HepG2 (cell line): ENCODE measurements at regions of chr6 and their contacts with region 1.

Region 1: DNA sequence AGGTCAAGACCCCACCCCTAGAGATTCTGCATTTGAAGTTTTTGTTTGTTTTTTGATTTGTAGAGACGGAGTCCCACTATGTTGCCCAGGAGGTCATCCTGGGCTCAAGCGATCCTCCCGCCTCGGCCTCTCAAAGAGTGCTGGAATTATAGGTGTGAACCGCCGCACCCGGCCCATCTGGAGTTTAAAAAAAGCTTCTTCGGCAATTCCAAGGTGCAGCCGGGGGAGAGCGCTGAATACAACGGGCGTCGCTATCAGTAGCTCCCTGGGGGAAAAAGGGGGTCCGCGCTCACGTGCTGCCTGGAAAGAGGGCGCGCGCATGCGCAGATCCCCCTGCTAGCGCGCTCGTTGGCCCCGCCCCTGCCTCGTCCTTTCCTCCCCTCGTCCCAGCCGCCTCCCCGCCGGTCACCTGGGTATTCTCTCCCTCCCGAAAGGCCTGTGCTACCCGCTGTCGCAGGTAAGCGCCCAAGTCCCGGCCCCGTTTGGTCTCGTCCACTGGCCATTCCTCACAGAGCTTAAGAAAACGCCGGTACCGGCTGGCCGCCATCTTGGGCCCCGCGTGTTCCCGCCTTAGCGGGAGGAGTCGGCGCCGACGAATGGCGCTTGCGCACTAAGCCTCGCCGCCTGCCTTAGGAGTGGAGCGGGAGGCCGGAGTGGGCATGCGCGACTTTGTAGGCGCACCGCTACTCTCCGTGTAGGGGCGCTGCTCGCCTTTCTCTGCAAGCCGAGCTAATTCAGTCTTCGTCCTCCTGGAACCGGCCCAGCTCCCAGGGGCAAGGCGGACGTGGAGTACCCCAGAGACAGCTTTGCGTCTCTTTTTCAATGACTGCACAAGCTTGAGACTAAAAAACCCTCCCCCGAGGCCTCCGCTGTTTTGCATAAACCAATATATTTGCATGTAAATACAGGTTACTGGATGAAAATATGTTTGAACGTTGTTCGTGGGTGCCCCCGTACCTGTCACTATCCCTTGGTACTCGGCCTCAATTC is at the start of gene UQCC2:
- DNase-seq: peak; percentile 95
- ATAC-seq: peak; percentile 94
- H3K4me3 ChIP-seq: peak within 1 kb of the TSS; percentile 75 to 83 (median 75)
- H3K27ac ChIP-seq: peak within 1 kb of the TSS; percentile 93
- H3K4me1 ChIP-seq: peaks cover 63% of the 10 kb centered on the region
- H3K27me3 ChIP-seq: no peaks in the 10 kb centered on the region; a peak in 1 of 5 replicates
- CTCF ChIP-seq: peak; percentile 98
- EP300 ChIP-seq: no peak
- POLR2A ChIP-seq: peak; percentile 85 to 96
- RAD21 ChIP-seq: peak; percentile 97
- total RNA-seq, gene UQCC2: 238 and 273 TPM in 2 replicates

Region 2: DNA sequence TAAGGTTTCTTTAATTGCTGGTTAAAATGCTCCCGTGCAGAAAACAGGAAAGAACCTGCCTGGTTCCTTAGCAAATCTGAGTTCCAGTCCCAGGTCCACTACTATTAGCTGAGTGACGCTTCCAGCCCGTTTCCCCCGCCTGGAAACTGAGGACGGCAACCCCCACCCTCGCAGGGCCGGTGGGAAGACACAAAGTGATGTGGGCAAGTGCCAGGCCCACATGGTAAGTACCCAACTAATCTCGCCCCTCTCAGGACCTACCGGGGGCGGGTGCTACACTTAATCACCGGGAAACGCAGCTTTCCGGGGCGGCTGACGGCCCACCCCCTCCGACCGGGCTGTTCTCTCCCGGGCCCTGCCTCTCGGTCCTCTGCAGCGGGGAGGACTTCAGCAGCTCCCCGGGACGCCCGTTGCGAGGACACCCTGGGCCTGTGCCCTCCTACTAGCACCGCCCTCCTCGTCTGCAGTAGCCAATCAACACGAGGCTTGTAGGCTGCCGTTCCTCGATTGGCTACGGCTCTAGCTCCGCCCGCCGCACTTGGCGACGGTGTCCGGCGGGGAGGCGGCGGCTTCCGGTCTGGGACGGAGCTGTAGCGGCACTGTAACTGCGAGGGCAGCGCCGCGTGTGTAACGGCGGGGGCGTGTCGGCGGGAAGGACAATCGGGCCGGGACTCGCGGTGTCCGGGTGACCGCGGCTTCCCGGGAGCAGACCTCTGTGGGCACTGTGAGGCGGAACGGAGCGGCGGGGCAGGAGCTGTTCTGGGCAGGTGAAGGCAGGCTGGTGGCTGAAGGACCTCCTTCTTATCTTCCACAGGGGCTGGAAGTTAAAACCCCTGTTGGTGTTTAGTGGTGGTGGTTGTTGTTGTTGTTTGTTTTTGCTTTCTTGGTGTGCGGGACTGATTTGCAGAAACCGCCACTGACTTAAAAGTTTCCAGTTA is 257.2 kb before region 1 on chr6 and contains the start of gene ZBTB9:
- CTCF ChIA-PET with region 1: no interaction called
- POLR2A ChIA-PET with region 1: interaction called, 10 read pairs
- in situ Hi-C with region 1: no loop called
- intact Hi-C with region 1: no loop called
- DNase-seq: peak; percentile 96
- ATAC-seq: peak; percentile 99
- H3K4me3 ChIP-seq: peak within 1 kb of the TSS; percentile 92 to 100 (median 95)
- H3K27ac ChIP-seq: peak within 1 kb of the TSS; percentile 46
- H3K4me1 ChIP-seq: peaks cover 20% of the 10 kb centered on the region
- H3K27me3 ChIP-seq: no peaks in the 10 kb centered on the region; a peak in 1 of 5 replicates
- CTCF ChIP-seq: peak; percentile 49
- EP300 ChIP-seq: no peak
- POLR2A ChIP-seq: peak; percentile 87 to 98
- RAD21 ChIP-seq: 0 out of 2 replicates have a peak, but pooled peaks have one; percentile 28
- total RNA-seq, gene ZBTB9: 9.2 and 11.5 TPM in 2 replicates

Region 3: GRCh38 chr6:33607784-33608161 is 103.7 kb before region 1 on chr6:
- CTCF ChIA-PET with region 1: no interaction called
- POLR2A ChIA-PET with region 1: interaction called, 11 read pairs
- in situ Hi-C with region 1: no loop called
- intact Hi-C with region 1: no loop called
- DNase-seq: peak; percentile 79
- ATAC-seq: peak; percentile 44
- H3K4me3 ChIP-seq: no peak overlapping the region
- H3K27ac ChIP-seq: no peak overlapping the region
- H3K4me1 ChIP-seq: peaks cover 68% of the 10 kb centered on the region
- H3K27me3 ChIP-seq: no peaks in the 10 kb centered on the region; a peak in 1 of 5 replicates
- CTCF ChIP-seq: peak; percentile 76
- EP300 ChIP-seq: no peak
- POLR2A ChIP-seq: no peak
- RAD21 ChIP-seq: peak; percentile 64

Region 4: GRCh38 chr6:33700391-33701050 is 10.9 kb before region 1 on chr6:
- CTCF ChIA-PET with region 1: no interaction called
- POLR2A ChIA-PET with region 1: interaction called, 22 read pairs
- in situ Hi-C with region 1: no loop called
- intact Hi-C with region 1: no loop called
- DNase-seq: peak; percentile 58
- ATAC-seq: peak; percentile 68
- H3K4me3 ChIP-seq: no peak overlapping the region
- H3K27ac ChIP-seq: no peak overlapping the region
- H3K4me1 ChIP-seq: peaks cover 11% of the 10 kb centered on the region; the same call in 1 of the 2 replicates
- H3K27me3 ChIP-seq: no peaks in the 10 kb centered on the region
- CTCF ChIP-seq: peak; percentile 87
- EP300 ChIP-seq: no peak
- POLR2A ChIP-seq: no peak
- RAD21 ChIP-seq: 0 out of 2 replicates have a peak, but pooled peaks have one; percentile 19

Region 5: DNA sequence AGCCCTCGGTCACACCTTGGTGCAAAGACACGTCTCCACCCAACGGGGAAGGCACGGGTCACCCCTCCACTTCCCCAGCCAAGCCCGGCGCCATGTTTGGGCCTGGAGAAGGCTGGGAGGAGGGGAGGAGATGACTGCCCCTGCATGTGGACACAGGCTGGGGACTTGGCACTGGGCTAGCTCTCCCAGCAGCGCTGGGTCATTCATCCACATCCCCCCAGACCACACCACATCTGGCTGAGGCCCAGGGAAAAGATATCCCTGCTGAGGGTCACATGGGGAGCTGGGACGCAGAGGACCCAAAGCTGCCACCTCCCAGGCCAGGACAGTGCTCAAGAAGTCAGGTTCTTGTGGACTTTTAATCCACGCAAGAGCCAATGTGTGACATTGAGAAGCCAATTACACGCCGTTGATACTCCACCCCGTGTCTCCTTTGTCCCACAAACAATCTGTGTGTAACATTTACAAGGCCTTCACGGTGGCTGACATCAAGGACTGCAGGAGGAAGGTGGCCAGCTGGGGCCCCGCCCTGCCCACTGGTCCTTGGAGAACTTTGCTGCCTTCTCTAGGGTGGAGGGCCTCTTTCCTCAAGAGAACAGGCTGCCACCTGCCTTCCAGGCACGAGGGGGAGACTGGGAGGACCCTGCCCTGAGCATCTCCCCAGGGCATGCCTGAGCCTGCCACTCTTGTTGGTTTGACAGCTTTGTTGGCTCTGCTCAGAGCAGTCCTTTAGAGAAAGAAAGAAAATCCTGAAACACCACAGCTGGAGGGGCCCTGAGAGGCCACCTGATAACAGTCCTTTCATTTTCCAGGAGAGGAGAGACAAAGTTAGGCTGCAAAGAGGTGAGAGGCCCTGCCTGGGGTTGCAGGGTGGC is 40.6 kb after region 1 on chr6:
- CTCF ChIA-PET with region 1: no interaction called
- POLR2A ChIA-PET with region 1: interaction called, 17 read pairs
- in situ Hi-C with region 1: no loop called
- intact Hi-C with region 1: no loop called
- DNase-seq: no peak
- ATAC-seq: peak; percentile 33
- H3K4me3 ChIP-seq: no peak overlapping the region
- H3K27ac ChIP-seq: no peak overlapping the region
- H3K4me1 ChIP-seq: peaks cover 33% of the 10 kb centered on the region
- H3K27me3 ChIP-seq: peaks cover 4 to 29% of the 10 kb centered on the region in 2 experiments; a peak in 4 of 5 replicates
- CTCF ChIP-seq: no peak
- EP300 ChIP-seq: no peak
- POLR2A ChIP-seq: no peak
- RAD21 ChIP-seq: no peak

Region 6: DNA sequence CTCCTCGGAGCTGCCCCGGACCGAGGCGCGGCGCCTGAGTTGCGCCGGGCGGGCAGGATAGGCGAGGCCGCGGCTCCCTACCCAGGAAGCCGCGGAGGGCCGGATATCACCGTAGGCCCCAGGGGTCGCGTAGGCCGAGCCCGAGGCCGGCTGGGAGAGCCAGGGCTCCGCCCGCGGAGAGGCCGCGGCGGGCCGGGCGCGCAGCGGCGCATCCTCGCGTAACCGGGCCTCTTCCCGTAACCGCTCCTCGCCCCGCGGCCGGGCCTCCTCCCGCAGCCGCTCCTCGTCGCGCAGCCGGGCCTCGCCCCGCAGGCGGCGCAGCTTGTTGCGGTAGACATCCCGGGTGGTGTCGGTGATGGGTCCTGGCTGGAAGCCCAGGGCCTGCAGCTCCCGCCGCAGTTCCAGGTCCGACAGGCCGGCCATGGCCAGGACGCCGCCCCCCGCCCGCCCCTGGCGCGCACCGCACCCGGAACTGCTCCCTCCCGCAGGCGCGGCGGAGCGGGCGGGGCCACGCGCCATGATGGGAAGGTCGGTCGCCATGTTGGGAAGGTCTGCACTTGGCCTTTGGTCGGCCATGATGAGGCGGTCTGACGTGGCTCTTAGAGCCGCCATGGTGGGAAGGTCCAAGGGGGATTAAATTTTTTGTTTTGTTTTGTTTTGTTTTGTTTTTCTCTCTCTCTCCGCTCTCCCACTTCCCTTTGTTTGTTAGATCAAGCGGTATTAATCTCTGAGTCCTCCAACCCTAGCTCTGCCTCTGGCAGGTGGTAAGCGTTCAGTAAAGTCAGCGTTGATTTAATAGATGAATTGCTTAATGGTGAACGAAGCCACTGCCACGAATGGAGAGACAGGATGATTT is 77.5 kb after region 1 on chr6 and contains the start of gene LEMD2:
- CTCF ChIA-PET with region 1: no interaction called
- POLR2A ChIA-PET with region 1: interaction called, 13 read pairs
- in situ Hi-C with region 1: no loop called
- intact Hi-C with region 1: no loop called
- DNase-seq: peak; percentile 81
- ATAC-seq: peak; percentile 91
- H3K4me3 ChIP-seq: peak within 1 kb of the TSS; percentile 66 to 87 (median 81)
- H3K27ac ChIP-seq: peak within 1 kb of the TSS; percentile 72
- H3K4me1 ChIP-seq: peaks cover 42% of the 10 kb centered on the region
- H3K27me3 ChIP-seq: peaks cover 0 to 16% of the 10 kb centered on the region in 2 experiments; a peak in 2 of 5 replicates
- CTCF ChIP-seq: peak; percentile 21; the same call in 1 of the 2 replicates
- EP300 ChIP-seq: 0 out of 4 replicates have a peak, but pooled peaks of 1 of the 2 experiments have one; percentile 12
- POLR2A ChIP-seq: peak; percentile 75 to 91
- RAD21 ChIP-seq: no peak; the same call in 1 of the 2 replicates
- total RNA-seq, gene LEMD2: 17.9 and 45.2 TPM in 2 replicates

Region 7: GRCh38 chr6:33822575-33823395 is 111.3 kb after region 1 on chr6:
- CTCF ChIA-PET with region 1: no interaction called
- POLR2A ChIA-PET with region 1: no interaction called
- in situ Hi-C with region 1: no loop called
- intact Hi-C with region 1: no loop called
- DNase-seq: peak; percentile 56
- ATAC-seq: peak; percentile 95
- H3K4me3 ChIP-seq: no peak overlapping the region
- H3K27ac ChIP-seq: no peak overlapping the region
- H3K4me1 ChIP-seq: peaks cover 20% of the 10 kb centered on the region
- H3K27me3 ChIP-seq: peaks cover 1 to 32% of the 10 kb centered on the region in 2 experiments; a peak in 3 of 5 replicates
- CTCF ChIP-seq: peak; percentile 47
- EP300 ChIP-seq: no peak
- POLR2A ChIP-seq: no peak
- RAD21 ChIP-seq: peak; percentile 28; the same call in 1 of the 2 replicates